OCI-LY7 (cell line): ENCODE measurements at regions of chr13 and their contacts with region 1.

Region 1: DNA sequence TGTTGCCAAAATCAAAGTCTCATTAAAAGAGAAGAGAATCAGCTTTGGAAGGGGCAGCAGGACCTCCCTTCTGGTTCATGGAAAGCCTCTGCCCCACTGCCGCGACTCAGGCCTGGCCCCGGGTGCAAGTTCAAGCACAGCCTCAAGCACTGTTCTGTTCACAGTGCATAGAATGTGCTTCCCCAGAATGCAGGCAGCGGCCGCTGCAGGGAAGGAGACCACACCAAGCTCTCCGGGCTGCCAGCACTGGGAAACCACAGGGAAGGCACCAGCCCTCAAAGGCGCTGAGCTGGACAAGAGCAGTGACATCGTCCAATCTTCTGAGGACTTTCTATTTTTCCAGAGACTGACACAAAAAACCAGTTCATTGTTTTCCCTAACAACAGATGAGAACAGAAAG is 55.5 kb downstream of the CRYL1 start:
- DNase-seq: no peak
- H3K4me3 ChIP-seq: no peak overlapping the region
- H3K27ac ChIP-seq: no peak overlapping the region
- H3K4me1 ChIP-seq: no peaks in the 10 kb centered on the region
- CTCF ChIP-seq: no peak

Region 2: DNA sequence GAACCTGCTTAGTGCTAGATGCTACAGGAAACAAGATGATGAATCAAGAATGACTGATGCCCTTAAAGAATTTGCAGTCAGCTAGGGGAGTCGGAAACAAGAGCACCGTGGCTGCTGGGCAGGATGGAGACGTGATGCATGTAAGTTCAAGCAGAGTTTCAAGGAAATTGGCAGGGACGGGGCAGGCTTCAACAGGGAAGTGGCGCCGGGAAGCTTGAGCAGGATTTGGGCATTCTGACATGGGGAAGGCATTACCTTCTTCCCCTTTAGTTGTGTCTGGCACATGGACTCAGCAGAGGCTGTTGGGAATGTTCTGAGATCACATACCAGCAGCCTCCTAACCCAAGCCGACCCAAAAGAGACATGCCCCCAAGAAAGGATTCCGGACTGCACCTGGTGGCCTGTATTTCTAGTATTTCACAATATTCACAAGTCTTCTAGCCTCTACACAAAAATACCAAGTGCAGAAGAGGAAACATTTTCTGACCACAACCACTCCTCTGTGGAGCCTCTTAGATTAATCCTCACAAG is 82.6 kb before region 1 on chr13:
- CTCF ChIA-PET with region 1: no interaction called
- POLR2A ChIA-PET with region 1: no interaction called
- intact Hi-C with region 1: no loop called
- DNase-seq: no peak
- H3K4me3 ChIP-seq: no peak overlapping the region
- H3K27ac ChIP-seq: no peak overlapping the region
- H3K4me1 ChIP-seq: no peaks in the 10 kb centered on the region
- CTCF ChIP-seq: no peak

Region 3: GRCh38 chr13:20456737-20457136 is 13.4 kb before region 1 on chr13:
- CTCF ChIA-PET with region 1: interaction called, 3 read pairs
- POLR2A ChIA-PET with region 1: interaction called, 12 read pairs
- intact Hi-C with region 1: no loop called
- DNase-seq: no peak
- H3K4me3 ChIP-seq: no peak overlapping the region
- H3K27ac ChIP-seq: no peak overlapping the region
- H3K4me1 ChIP-seq: no peaks in the 10 kb centered on the region
- CTCF ChIP-seq: no peak

Region 4: DNA sequence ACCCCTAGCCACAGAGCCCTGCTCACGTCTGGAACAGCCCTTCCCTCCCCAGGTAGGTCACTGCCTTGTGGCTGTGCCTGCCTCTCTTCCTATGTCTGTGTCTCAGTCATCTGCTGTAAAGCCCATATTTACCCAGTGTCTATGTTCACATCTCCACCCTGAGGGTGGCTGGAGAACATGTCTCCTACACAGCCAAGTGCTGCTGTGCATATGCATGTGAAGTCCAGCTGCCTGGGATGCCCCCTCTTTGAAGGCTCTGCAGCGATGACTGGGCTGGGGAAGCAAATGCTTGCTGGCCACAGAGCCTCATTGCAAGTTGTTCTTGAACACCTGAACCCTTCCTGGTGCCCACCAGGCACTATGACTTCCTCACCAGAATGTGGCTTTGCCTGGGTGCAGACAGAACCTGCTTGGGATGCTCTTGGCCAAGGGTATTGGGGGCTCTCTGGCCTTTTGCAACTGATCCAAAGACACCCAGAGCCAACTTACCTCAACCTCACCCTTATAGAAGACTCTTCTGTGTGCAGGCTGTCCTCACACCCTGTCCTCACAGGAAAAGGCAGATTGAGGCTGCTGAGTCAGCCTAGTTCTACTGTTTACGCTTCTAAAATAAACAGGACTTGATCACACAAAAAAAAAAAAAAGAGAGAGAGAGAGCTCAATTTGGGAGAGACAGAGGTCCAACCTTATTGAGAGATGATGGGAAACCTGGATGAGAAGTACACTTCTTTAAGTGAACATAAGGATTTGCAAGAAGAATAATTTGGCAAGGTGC is 732.8 kb after region 1 on chr13:
- CTCF ChIA-PET with region 1: no interaction called
- POLR2A ChIA-PET with region 1: no interaction called
- intact Hi-C with region 1: no loop called
- DNase-seq: no peak
- H3K4me3 ChIP-seq: no peak overlapping the region
- H3K27ac ChIP-seq: no peak overlapping the region
- H3K4me1 ChIP-seq: no peaks in the 10 kb centered on the region
- CTCF ChIP-seq: no peak